Caco-2 (cell line): ENCODE measurements at regions of chr12 and their contacts with region 1.

Region 1: GRCh38 chr12:103503977-103504376 is 8.2 kb upstream of the C12orf42 start:
- DNase-seq: peak in 1 of 2 experiments; percentile 45
- H3K4me3 ChIP-seq: no peak overlapping the region
- H3K4me3 Mint-ChIP-seq: no peak overlapping the region
- H3K27ac Mint-ChIP-seq: no peak overlapping the region
- H3K4me1 ChIP-seq: no peaks in the 10 kb centered on the region
- H3K4me1 Mint-ChIP-seq: peaks cover 5% of the 10 kb centered on the region
- H3K27me3 ChIP-seq: no peaks in the 10 kb centered on the region
- H3K27me3 Mint-ChIP-seq: peaks cover 2% of the 10 kb centered on the region
- CTCF ChIP-seq: peak; percentile 50 to 54

Region 2: GRCh38 chr12:102948941-102949352 is 555.0 kb before region 1 on chr12:
- CTCF ChIA-PET with region 1: no interaction called
- POLR2A ChIA-PET with region 1: no interaction called
- intact Hi-C with region 1: loop called (anchors 1 kb)
- DNase-seq: peak in 1 of 2 experiments; percentile 60
- H3K4me3 ChIP-seq: no peak overlapping the region
- H3K4me3 Mint-ChIP-seq: no peak overlapping the region
- H3K27ac Mint-ChIP-seq: no peak overlapping the region
- H3K4me1 ChIP-seq: no peaks in the 10 kb centered on the region
- H3K4me1 Mint-ChIP-seq: no peaks in the 10 kb centered on the region
- H3K27me3 ChIP-seq: no peaks in the 10 kb centered on the region; the same call in 1 of the 2 replicates
- H3K27me3 Mint-ChIP-seq: peaks cover 5% of the 10 kb centered on the region
- CTCF ChIP-seq: peak; percentile 72 to 88

Region 3: DNA sequence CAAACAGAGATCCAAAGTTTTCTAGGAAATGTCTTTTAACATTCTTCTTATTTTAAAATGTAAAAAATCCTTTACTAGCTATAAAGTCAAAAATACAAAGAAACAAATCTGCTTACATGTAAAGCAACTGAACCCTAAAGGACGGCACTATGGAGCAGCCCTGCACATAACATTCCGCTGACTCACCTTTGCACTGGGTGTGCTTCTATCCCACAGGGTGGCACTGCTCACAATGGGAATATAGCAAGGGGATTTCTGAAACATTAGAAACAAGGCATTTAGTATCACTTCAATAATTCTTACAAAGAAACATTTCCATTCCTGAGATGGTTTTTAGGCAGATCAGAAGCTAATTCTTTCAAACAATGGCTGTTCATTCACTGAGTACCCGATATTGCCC is 102.6 kb before region 1 on chr12:
- CTCF ChIA-PET with region 1: no interaction called
- POLR2A ChIA-PET with region 1: no interaction called
- intact Hi-C with region 1: loop called (anchors 1 kb)
- DNase-seq: peak; percentile 14 to 47
- H3K4me3 ChIP-seq: no peak overlapping the region
- H3K4me3 Mint-ChIP-seq: no peak overlapping the region
- H3K27ac Mint-ChIP-seq: no peak overlapping the region
- H3K4me1 ChIP-seq: no peaks in the 10 kb centered on the region
- H3K4me1 Mint-ChIP-seq: no peaks in the 10 kb centered on the region
- H3K27me3 ChIP-seq: no peaks in the 10 kb centered on the region
- H3K27me3 Mint-ChIP-seq: peaks cover 2% of the 10 kb centered on the region
- CTCF ChIP-seq: peak in 1 of 2 experiments; percentile 47

Region 4: GRCh38 chr12:103530307-103531066 is 26.5 kb after region 1 on chr12:
- CTCF ChIA-PET with region 1: no interaction called
- POLR2A ChIA-PET with region 1: no interaction called
- intact Hi-C with region 1: no loop called
- DNase-seq: no peak
- H3K4me3 ChIP-seq: no peak overlapping the region
- H3K4me3 Mint-ChIP-seq: no peak overlapping the region
- H3K27ac Mint-ChIP-seq: no peak overlapping the region
- H3K4me1 ChIP-seq: no peaks in the 10 kb centered on the region
- H3K4me1 Mint-ChIP-seq: no peaks in the 10 kb centered on the region
- H3K27me3 ChIP-seq: no peaks in the 10 kb centered on the region
- H3K27me3 Mint-ChIP-seq: no peaks in the 10 kb centered on the region
- CTCF ChIP-seq: no peak

Region 5: DNA sequence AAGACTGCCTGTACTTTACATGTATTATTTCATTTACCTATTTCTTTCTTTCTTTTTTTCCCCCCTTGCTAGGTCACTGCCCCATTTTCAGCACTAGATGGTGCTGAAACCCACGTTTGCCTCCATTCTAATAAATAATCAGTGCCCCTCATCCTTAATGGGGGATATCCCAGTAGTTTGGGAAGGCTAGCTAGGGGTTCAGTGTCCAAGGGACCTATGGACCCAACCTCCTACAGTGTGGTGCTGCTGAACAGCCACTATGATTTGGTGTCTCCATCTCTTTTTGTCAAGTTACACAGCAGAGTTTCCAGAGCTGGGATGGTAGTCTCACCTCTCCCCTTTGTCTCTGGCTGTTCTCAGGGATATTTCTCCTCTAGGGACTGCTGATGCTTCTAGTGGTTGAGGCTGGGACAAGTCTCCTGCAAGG is 553.8 kb after region 1 on chr12:
- CTCF ChIA-PET with region 1: no interaction called
- POLR2A ChIA-PET with region 1: no interaction called
- intact Hi-C with region 1: no loop called
- DNase-seq: no peak
- H3K4me3 ChIP-seq: no peak overlapping the region
- H3K4me3 Mint-ChIP-seq: no peak overlapping the region
- H3K27ac Mint-ChIP-seq: no peak overlapping the region
- H3K4me1 ChIP-seq: no peaks in the 10 kb centered on the region
- H3K4me1 Mint-ChIP-seq: no peaks in the 10 kb centered on the region
- H3K27me3 ChIP-seq: no peaks in the 10 kb centered on the region
- H3K27me3 Mint-ChIP-seq: peaks cover 18% of the 10 kb centered on the region
- CTCF ChIP-seq: peak; percentile 49 to 61